Activated T-helper 2 cell treated with anti-CD3 and anti-CD28 coated beads, Interferon-gamma antibody, Interleukin-2, Interleukin-4, amounts not matched to agents 10 μg/mL and 5 μg/mL and 100 μg/mL, durations not matched to agents 14 hours and 24 hours and 36 hours (primary cell): ENCODE measurements at regions of chr2 and their contacts with region 1.

Region 1: GRCh38 chr2:205766779-205767359 is 84.6 kb downstream of the NRP2 start:
- DNase-seq: peak; percentile 22
- H3K4me3 Mint-ChIP-seq: no peak overlapping the region
- H3K27ac Mint-ChIP-seq: no peak overlapping the region
- H3K4me1 Mint-ChIP-seq: peaks cover 12% of the 10 kb centered on the region
- H3K27me3 Mint-ChIP-seq: peaks cover 5% of the 10 kb centered on the region

Region 2: GRCh38 chr2:205858881-205859441 is 92.1 kb after region 1 on chr2:
- intact Hi-C with region 1: no loop called
- DNase-seq: no peak
- H3K4me3 Mint-ChIP-seq: no peak overlapping the region
- H3K27ac Mint-ChIP-seq: no peak overlapping the region
- H3K4me1 Mint-ChIP-seq: no peaks in the 10 kb centered on the region
- H3K27me3 Mint-ChIP-seq: peaks cover 21% of the 10 kb centered on the region

Region 3: GRCh38 chr2:205925373-205926337 is 158.8 kb after region 1 on chr2:
- intact Hi-C with region 1: loop called (anchors 1 kb)
- DNase-seq: peak; percentile 46
- H3K4me3 Mint-ChIP-seq: no peak overlapping the region
- H3K27ac Mint-ChIP-seq: no peak overlapping the region
- H3K4me1 Mint-ChIP-seq: peaks cover 6% of the 10 kb centered on the region
- H3K27me3 Mint-ChIP-seq: peaks cover 44% of the 10 kb centered on the region

Region 4: GRCh38 chr2:206488623-206489022 is 721.8 kb after region 1 on chr2:
- intact Hi-C with region 1: no loop called
- DNase-seq: no peak
- H3K4me3 Mint-ChIP-seq: no peak overlapping the region
- H3K27ac Mint-ChIP-seq: no peak overlapping the region
- H3K4me1 Mint-ChIP-seq: peaks cover 2% of the 10 kb centered on the region
- H3K27me3 Mint-ChIP-seq: peaks cover 5% of the 10 kb centered on the region